ENCODE measurements at regions of chr4 and their contacts with region 1.

Region 1: DNA sequence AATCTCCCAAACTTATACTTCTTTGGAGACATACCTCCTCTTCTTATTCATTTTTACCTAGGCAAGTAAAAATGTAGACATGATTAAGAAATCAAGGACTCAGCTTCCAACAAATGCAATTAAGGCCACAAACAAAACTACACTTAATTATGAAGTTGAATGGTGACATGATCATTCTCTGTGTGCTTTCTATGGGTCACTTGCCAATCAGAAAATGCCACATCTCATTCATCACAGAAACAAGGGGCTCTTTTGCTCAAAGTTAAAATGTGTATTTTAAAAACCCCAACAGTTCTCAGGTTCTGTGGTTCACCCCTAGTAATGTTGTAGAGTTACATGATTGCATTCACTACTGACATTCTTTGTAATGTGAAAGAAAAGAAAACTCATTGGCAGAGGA is 273.5 kb downstream of the DCHS2 start:
- DNase-seq: no peak
- ATAC-seq: no peak
- H3K4me3 ChIP-seq: no peak overlapping the region
- H3K4me3 Mint-ChIP-seq: no peak overlapping the region
- H3K27ac ChIP-seq: no peak overlapping the region
- H3K27ac Mint-ChIP-seq: no peak overlapping the region
- H3K4me1 ChIP-seq: no peaks in the 10 kb centered on the region
- H3K4me1 Mint-ChIP-seq: no peaks in the 10 kb centered on the region
- H3K27me3 ChIP-seq: no peaks in the 10 kb centered on the region
- H3K27me3 Mint-ChIP-seq: no peaks in the 10 kb centered on the region

Region 2: DNA sequence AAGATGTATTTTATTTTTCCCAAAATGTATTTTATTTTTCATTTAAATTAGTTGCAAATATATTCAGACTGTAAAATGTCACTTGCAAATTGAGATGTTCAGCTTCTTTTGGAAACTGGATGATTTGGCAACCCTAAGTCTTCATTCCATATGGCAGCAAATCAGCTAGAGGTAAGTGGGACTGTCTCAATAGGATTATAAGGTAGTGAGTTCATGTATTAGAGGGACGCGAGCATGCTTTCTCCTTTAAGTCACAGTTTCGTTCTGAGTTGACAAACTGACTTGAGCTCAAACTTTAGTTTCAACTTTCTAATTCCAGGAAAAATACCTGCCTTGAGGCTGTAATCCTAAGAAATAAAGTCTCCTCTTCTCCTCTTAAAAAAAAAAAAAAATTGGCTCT is 796.1 kb before region 1 on chr4:
- CTCF ChIA-PET with region 1: no interaction called
- POLR2A ChIA-PET with region 1: no interaction called
- DNase-seq: no peak
- ATAC-seq: no peak
- H3K4me3 ChIP-seq: no peak overlapping the region
- H3K4me3 Mint-ChIP-seq: no peak overlapping the region
- H3K27ac ChIP-seq: no peak overlapping the region
- H3K27ac Mint-ChIP-seq: no peak overlapping the region
- H3K4me1 ChIP-seq: peaks cover 16 to 19% of the 10 kb centered on the region in 2 experiments
- H3K4me1 Mint-ChIP-seq: peaks cover 26 to 38% (median 27%) of the 10 kb centered on the region in 3 donors
- H3K27me3 ChIP-seq: no peaks in the 10 kb centered on the region
- H3K27me3 Mint-ChIP-seq: no peaks in the 10 kb centered on the region

Region 3: DNA sequence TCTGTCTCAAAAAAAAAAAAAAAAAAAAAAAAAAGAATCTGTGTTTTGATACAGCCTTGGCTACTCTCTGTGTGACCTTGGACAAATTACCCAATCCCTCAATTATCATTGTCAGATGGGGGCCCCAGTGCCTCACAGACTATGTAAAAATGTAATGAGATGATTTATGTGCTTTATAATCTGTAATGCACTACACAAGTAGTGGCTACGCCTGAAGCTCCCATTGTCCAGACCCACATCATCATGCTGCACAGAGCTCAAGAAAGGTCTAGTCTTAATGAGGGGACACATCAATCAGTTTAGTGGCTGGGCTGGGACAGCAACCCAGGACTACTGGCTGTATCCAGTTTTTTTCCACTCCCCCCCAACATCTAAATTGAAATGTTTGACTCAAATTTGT is 34.8 kb before region 1 on chr4:
- CTCF ChIA-PET with region 1: interaction called in 1 of 2 experiments, 11 read pairs
- POLR2A ChIA-PET with region 1: no interaction called
- DNase-seq: no peak
- ATAC-seq: no peak
- H3K4me3 ChIP-seq: no peak overlapping the region
- H3K4me3 Mint-ChIP-seq: no peak overlapping the region
- H3K27ac ChIP-seq: no peak overlapping the region
- H3K27ac Mint-ChIP-seq: no peak overlapping the region
- H3K4me1 ChIP-seq: no peaks in the 10 kb centered on the region
- H3K4me1 Mint-ChIP-seq: no peaks in the 10 kb centered on the region
- H3K27me3 ChIP-seq: no peaks in the 10 kb centered on the region
- H3K27me3 Mint-ChIP-seq: peaks cover 4 to 19% of the 10 kb centered on the region in 2 donors

Region 4: GRCh38 chr4:154231806-154232478 is 13.9 kb after region 1 on chr4:
- CTCF ChIA-PET with region 1: no interaction called
- POLR2A ChIA-PET with region 1: no interaction called
- DNase-seq: no peak
- ATAC-seq: no peak
- H3K4me3 ChIP-seq: no peak overlapping the region
- H3K4me3 Mint-ChIP-seq: no peak overlapping the region
- H3K27ac ChIP-seq: no peak overlapping the region
- H3K27ac Mint-ChIP-seq: no peak overlapping the region
- H3K4me1 ChIP-seq: no peaks in the 10 kb centered on the region
- H3K4me1 Mint-ChIP-seq: no peaks in the 10 kb centered on the region
- H3K27me3 ChIP-seq: no peaks in the 10 kb centered on the region
- H3K27me3 Mint-ChIP-seq: peaks cover 9 to 43% of the 10 kb centered on the region in 2 donors